ENCODE measurements at regions of chr1 and their contacts with region 1.

Region 1: GRCh38 chr1:89065079-89065868 is at the start of gene GBP1:
- DNase-seq: no peak
- ATAC-seq: peak; percentile 92
- H3K4me3 ChIP-seq: peak within 1 kb of the TSS; percentile 94 to 98
- H3K27ac ChIP-seq: peak within 1 kb of the TSS; percentile 15 to 98
- H3K4me1 ChIP-seq: no peaks in the 10 kb centered on the region
- H3K27me3 ChIP-seq: no peaks in the 10 kb centered on the region
- total RNA-seq, gene GBP1: 43.8 to 62.6 TPM

Region 2: DNA sequence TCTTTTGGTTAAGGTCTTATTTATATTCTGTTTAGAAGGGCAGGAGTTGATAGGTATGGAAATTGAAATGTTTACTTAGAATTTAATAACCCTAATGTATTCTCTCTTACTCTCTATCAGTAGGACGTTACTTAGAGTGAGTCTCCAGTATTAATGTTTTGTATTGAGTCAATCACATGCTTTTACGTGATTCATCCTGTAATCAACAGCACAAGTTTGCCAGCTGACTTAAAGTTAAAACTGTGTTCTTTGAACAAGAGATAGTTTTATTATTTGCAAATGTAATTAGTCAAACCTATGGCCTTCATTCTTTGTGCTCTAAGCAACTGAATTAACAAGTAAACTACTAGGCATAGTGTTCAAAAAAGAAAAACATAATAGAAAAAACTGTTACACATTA is 323.9 kb before region 1 on chr1:
- intact Hi-C with region 1: no loop called
- DNase-seq: no peak
- ATAC-seq: no peak
- H3K4me3 ChIP-seq: no peak overlapping the region
- H3K27ac ChIP-seq: no peak overlapping the region
- H3K4me1 ChIP-seq: no peaks in the 10 kb centered on the region
- H3K27me3 ChIP-seq: no peaks in the 10 kb centered on the region

Region 3: DNA sequence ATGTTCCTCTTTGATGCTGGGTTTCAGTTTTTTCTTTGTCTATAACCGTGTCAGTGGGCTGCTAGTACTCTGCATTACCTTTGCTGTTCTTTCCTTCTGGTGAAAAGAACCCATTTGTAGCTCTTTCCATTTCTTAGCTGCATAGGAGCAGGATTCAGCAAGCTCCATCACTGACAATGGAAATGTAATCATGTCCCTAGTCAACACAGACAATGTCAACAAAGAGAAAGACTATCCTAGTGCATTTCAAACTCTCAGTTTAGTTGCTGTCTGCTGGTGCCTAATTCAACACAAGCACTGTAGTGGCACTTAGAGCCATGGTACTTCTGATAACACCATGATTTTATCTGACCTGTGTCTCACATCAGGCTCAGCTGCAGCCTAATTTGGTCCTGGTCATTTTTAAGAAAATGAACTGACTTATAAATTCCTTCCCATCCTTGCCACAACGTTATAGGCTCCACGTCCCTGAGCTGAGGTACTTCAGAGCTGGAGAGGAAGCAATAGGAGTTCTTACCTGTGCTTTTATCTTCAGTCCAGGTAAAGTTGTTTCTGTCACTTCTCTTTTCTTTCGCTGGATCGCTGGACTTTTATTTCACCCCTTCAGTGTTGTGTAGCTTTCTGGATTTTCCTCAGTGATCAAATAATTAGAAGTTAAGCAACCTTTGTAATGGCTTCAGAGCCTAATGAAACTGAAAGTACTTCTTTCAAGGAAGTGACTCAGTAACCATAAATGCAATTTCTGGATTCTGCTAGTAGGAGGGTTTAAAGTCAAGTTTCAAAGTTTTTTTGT is 42.9 kb before region 1 on chr1 and contains the start of gene GBP3:
- intact Hi-C with region 1: loop called in 1 of 2 experiments (anchors 5 kb)
- DNase-seq: no peak
- ATAC-seq: peak; percentile 87
- H3K4me3 ChIP-seq: peak within 1 kb of the TSS; percentile 85 to 95
- H3K27ac ChIP-seq: peak within 1 kb of the TSS; percentile 70 to 99
- H3K4me1 ChIP-seq: no peaks in the 10 kb centered on the region
- H3K27me3 ChIP-seq: no peaks in the 10 kb centered on the region
- total RNA-seq, gene GBP3: 20.6 to 47.8 TPM

Region 4: DNA sequence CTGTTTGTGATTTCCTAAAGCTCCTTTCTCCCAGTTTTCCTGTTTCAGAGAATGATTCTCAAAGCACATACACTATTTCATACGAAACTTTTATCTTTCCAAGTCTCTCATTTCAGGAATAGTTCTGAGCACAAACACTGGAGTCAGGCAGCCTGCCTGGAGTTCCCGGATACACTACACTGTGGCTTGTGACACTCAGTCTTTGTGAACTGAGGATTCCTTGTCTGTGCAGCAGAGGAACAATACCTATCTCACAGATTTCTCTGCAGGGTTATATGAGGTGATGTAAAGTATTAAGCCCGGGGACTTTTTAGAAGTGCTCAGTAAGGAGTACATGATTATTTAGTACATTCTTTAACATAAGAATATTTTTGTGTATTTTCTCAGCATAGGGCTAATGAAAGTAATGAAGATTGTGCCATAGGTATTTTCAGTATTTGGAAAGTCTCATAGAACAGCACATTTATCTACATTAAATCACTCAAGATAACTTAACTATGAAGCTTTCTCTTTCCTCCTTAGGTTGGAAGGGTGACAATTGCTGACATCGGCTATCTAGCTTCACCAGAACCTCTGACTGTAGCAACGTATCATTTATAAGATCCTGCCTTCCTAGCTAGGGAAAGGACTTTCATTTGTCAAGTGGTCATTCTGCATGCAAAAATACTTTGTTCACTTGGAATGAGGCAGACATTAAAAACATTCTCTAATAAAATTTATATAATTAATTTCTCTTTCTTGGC is 47.8 kb after region 1 on chr1:
- intact Hi-C with region 1: no loop called
- DNase-seq: no peak
- ATAC-seq: no peak
- H3K4me3 ChIP-seq: no peak overlapping the region
- H3K27ac ChIP-seq: no peak overlapping the region
- H3K4me1 ChIP-seq: no peaks in the 10 kb centered on the region
- H3K27me3 ChIP-seq: no peaks in the 10 kb centered on the region

Region 5: DNA sequence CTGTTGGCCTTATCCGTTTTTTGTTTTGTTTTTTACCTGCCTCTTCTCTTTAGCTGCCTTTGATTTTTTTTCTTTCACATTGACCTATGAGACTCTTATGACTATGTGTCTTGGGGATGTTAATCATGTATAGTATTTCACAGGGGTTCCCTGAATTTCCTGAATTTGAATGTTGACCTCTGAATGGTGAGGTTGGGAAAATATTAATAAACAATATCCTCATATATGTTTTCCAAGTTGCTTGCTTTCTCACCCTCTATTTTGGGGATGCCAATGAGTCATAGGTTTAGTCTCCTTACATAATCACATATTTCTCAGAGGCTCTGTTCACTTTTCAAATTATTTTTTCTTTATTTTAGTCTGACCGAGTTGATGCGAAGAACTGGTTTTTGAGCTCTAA is 177.8 kb after region 1 on chr1:
- intact Hi-C with region 1: no loop called
- DNase-seq: no peak
- ATAC-seq: no peak
- H3K4me3 ChIP-seq: no peak overlapping the region
- H3K27ac ChIP-seq: no peak overlapping the region
- H3K4me1 ChIP-seq: no peaks in the 10 kb centered on the region
- H3K27me3 ChIP-seq: no peaks in the 10 kb centered on the region